PC-3 (cell line): ENCODE measurements at regions of chr3 and their contacts with region 1.

Region 1: DNA sequence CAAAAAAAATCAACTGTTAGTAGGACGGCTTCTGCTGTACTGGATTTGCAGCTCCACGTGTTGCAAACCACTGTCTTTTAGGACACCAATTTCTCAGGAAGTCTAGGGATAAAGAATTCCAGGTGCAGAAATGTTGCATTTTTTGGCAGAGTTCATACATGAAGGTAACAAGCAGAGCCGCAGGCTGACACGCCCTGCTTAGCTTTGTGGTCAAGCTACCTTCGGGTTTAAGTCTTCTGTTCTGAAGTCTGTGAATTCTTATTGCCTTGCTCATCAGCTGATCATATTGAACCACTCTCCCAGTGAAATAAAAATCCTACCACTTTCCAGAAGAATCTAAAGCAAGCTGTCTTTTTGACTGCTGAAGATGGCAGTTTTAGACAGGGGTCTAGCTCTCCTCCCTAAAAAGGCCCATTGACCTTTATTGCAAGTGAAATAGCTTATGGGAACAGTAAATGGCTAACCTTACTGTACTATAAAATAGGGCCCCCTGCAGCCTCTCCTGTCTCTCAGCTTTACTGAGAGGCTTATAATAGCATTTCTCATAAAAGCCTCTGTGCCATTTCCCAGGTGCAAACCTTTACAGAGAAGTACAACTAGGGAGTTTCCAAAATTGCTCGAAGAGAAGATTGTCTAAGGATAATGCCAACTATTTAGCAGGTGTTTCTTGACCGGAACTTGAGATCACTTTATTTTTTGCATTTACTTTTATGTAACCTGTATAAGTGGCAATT is 262.2 kb upstream of the IL12A start:
- DNase-seq: peak; percentile 97
- ATAC-seq: peak; percentile 92
- H3K4me3 ChIP-seq: peak overlapping the region; percentile 33; the same call in 1 of the 2 replicates
- H3K27ac ChIP-seq: peak overlapping the region; percentile 61
- H3K4me1 ChIP-seq: peaks cover 42% of the 10 kb centered on the region
- H3K27me3 ChIP-seq: no peaks in the 10 kb centered on the region
- CTCF ChIP-seq: no peak

Region 2: GRCh38 chr3:159548675-159549335 is 177.6 kb before region 1 on chr3:
- CTCF ChIA-PET with region 1: no interaction called
- POLR2A ChIA-PET with region 1: no interaction called
- intact Hi-C with region 1: no loop called
- DNase-seq: peak; percentile 67
- ATAC-seq: peak; percentile 86
- H3K4me3 ChIP-seq: no peak overlapping the region
- H3K27ac ChIP-seq: peak overlapping the region; percentile 7; the same call in 1 of the 2 replicates
- H3K4me1 ChIP-seq: peaks cover 9% of the 10 kb centered on the region; the same call in 1 of the 2 replicates
- H3K27me3 ChIP-seq: no peaks in the 10 kb centered on the region
- CTCF ChIP-seq: no peak

Region 3: GRCh38 chr3:159664009-159664408 is 62.4 kb before region 1 on chr3:
- CTCF ChIA-PET with region 1: interaction called, 10 read pairs
- POLR2A ChIA-PET with region 1: no interaction called
- intact Hi-C with region 1: no loop called
- DNase-seq: peak; percentile 79
- ATAC-seq: 0 out of 2 replicates have a peak, but pooled peaks have one; percentile 43
- H3K4me3 ChIP-seq: no peak overlapping the region
- H3K27ac ChIP-seq: no peak overlapping the region
- H3K4me1 ChIP-seq: peaks cover 9% of the 10 kb centered on the region
- H3K27me3 ChIP-seq: no peaks in the 10 kb centered on the region
- CTCF ChIP-seq: no peak